Breast epithelium (tissue), 4 donors: ENCODE measurements at regions of chr5 and their contacts with region 1.

Region 1: GRCh38 chr5:104951829-104952228 is 1389.2 kb upstream of the NUDT12 start:
- DNase-seq: no peak
- H3K4me3 ChIP-seq: no peak overlapping the region
- H3K27ac ChIP-seq: no peak overlapping the region
- H3K4me1 ChIP-seq: no peaks in the 10 kb centered on the region
- H3K27me3 ChIP-seq: no peaks in the 10 kb centered on the region
- CTCF ChIP-seq: no peak
- POLR2A ChIP-seq: no peak

Region 2: GRCh38 chr5:104915226-104915625 is 36.6 kb before region 1 on chr5:
- intact Hi-C with region 1: loop called (anchors 1 kb)
- DNase-seq: no peak
- H3K4me3 ChIP-seq: no peak overlapping the region
- H3K27ac ChIP-seq: no peak overlapping the region
- H3K4me1 ChIP-seq: no peaks in the 10 kb centered on the region
- H3K27me3 ChIP-seq: no peaks in the 10 kb centered on the region
- CTCF ChIP-seq: no peak
- POLR2A ChIP-seq: no peak

Region 3: GRCh38 chr5:105283134-105283533 is 331.3 kb after region 1 on chr5:
- intact Hi-C with region 1: no loop called
- DNase-seq: no peak
- H3K4me3 ChIP-seq: no peak overlapping the region
- H3K27ac ChIP-seq: no peak overlapping the region
- H3K4me1 ChIP-seq: no peaks in the 10 kb centered on the region
- H3K27me3 ChIP-seq: no peaks in the 10 kb centered on the region
- CTCF ChIP-seq: no peak
- POLR2A ChIP-seq: no peak